Left ventricle myocardium superior (tissue), 1 donor: ENCODE measurements at regions of chr11 and their contacts with region 1.

Region 1: DNA sequence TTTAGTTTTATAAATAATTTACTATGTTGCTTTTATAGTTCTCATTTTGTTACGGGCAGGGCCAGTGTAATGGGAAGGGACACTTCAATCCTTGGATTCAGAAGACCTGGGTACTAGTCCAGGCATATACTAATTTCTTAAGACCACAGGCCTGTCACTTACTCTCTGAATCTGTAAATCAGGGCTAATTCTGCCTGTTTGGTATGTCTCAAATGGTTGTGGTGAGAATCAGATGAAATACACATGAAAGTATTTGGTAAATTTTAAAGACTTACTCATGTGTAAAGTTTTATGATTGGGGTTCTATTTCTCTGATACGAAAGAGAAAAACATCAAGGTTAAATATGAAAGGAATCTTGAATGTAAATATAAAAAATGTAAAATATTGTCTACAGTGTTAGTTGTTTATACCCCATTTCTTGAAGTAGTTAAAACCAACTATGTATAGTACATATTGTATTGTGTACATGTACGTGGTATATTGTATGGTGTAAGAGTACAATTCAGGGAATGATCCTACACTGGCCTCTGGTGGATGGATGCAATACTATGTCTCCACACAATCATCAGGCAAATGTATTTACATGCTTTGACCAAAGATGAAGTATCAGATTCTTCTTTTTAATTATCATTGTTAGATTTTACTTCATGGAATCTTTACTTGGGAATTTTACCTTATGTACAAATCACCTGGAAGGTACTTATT is 24.5 kb upstream of the RAG2 start:
- DNase-seq: no peak
- ATAC-seq: peak; percentile 66

Region 2: DNA sequence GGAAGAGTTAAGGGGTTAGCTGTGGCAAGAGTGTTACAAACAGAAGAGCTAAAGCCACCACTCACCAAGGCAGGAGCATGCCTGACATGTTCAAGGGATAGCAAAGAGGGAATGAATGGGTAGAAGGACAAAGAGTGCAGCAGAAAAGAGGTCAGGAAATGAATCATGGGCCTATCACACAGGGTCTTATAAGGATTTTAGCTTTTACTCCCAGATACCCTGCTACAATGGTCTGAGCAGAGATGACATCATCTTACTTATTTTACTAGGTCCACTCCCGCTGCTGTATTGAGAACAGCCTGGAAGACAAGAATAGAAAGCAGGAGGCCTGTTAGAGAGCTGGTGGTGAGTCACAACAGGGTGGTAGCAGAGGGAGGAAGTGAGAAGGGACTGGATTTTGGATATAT is 122.3 kb before region 1 on chr11:
- intact Hi-C with region 1: loop called (anchors 5 kb)
- DNase-seq: no peak
- ATAC-seq: peak; percentile 96